ENCODE measurements at regions of chrX and their contacts with region 1.

Region 1: GRCh38 chrX:14676431-14676830 is 147.1 kb downstream of the GLRA2 start:
- DNase-seq: no peak
- ATAC-seq: no peak
- H3K4me3 ChIP-seq: no peak overlapping the region
- H3K27ac ChIP-seq: no peak overlapping the region
- H3K4me1 ChIP-seq: no peaks in the 10 kb centered on the region
- H3K27me3 ChIP-seq: no peaks in the 10 kb centered on the region
- CTCF ChIP-seq: no peak
- EP300 ChIP-seq: no peak
- POLR2A ChIP-seq: no peak
- RAD21 ChIP-seq: no peak

Region 2: GRCh38 chrX:14607446-14607985 is 68.9 kb before region 1 on chrX:
- CTCF ChIA-PET with region 1: no interaction called
- POLR2A ChIA-PET with region 1: no interaction called
- in situ Hi-C with region 1: no loop called
- intact Hi-C with region 1: no loop called
- DNase-seq: no peak
- ATAC-seq: no peak
- H3K4me3 ChIP-seq: no peak overlapping the region
- H3K27ac ChIP-seq: no peak overlapping the region
- H3K4me1 ChIP-seq: no peaks in the 10 kb centered on the region
- H3K27me3 ChIP-seq: no peaks in the 10 kb centered on the region
- CTCF ChIP-seq: no peak
- EP300 ChIP-seq: no peak
- POLR2A ChIP-seq: no peak
- RAD21 ChIP-seq: no peak

Region 3: DNA sequence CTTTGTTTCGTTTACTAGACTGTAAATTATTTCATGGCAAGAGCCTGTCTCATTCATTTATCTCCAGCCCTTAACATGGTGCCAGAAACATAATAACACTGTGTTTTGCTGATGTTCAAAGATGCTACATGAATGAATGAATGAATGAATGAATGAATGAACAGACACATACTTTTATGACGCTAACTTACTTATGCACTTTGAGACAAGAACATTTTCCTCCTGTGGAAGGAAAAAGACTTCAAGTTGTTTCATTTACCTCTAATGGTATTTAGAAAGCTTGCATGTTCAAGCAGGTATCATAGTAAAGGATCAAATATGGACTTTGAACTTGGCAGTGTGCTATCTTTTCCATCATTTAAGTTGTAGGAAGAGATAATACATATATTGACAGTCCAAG is 15.5 kb before region 1 on chrX:
- CTCF ChIA-PET with region 1: no interaction called
- POLR2A ChIA-PET with region 1: no interaction called
- in situ Hi-C with region 1: no loop called
- intact Hi-C with region 1: loop called (anchors 1 kb)
- DNase-seq: peak; percentile 21
- ATAC-seq: no peak
- H3K4me3 ChIP-seq: no peak overlapping the region
- H3K27ac ChIP-seq: no peak overlapping the region
- H3K4me1 ChIP-seq: peaks cover 6% of the 10 kb centered on the region; the same call in 1 of the 2 replicates
- H3K27me3 ChIP-seq: no peaks in the 10 kb centered on the region
- CTCF ChIP-seq: no peak
- EP300 ChIP-seq: no peak
- POLR2A ChIP-seq: no peak
- RAD21 ChIP-seq: no peak

Region 4: GRCh38 chrX:15854712-15855567 is 1178.5 kb after region 1 on chrX and contains the start of gene AP1S2:
- CTCF ChIA-PET with region 1: no interaction called
- POLR2A ChIA-PET with region 1: no interaction called
- in situ Hi-C with region 1: no loop called
- intact Hi-C with region 1: no loop called
- DNase-seq: peak; percentile 80
- ATAC-seq: peak; percentile 97
- H3K4me3 ChIP-seq: peak within 1 kb of the TSS; percentile 67 to 74 (median 72)
- H3K27ac ChIP-seq: peak within 1 kb of the TSS; percentile 64
- H3K4me1 ChIP-seq: peaks cover 22% of the 10 kb centered on the region; the same call in 1 of the 2 replicates
- H3K27me3 ChIP-seq: peaks cover 0 to 3% of the 10 kb centered on the region in 2 experiments; a peak in 1 of 5 replicates
- CTCF ChIP-seq: no peak
- EP300 ChIP-seq: no peak
- POLR2A ChIP-seq: no peak; a peak in 1 of 4 replicates
- RAD21 ChIP-seq: no peak
- total RNA-seq, gene AP1S2: 18.8 and 22.7 TPM in 2 replicates

Measured in HepG2 (cell line).